ENCODE measurements at regions of chr6 and their contacts with region 1.

Region 1: GRCh38 chr6:153814136-153814535 is 224.9 kb upstream of the OPRM1 start:
- H3K4me3 ChIP-seq: no peak overlapping the region
- H3K27ac ChIP-seq: no peak overlapping the region
- H3K4me1 ChIP-seq: no peaks in the 10 kb centered on the region
- CTCF ChIP-seq: no peak

Region 2: DNA sequence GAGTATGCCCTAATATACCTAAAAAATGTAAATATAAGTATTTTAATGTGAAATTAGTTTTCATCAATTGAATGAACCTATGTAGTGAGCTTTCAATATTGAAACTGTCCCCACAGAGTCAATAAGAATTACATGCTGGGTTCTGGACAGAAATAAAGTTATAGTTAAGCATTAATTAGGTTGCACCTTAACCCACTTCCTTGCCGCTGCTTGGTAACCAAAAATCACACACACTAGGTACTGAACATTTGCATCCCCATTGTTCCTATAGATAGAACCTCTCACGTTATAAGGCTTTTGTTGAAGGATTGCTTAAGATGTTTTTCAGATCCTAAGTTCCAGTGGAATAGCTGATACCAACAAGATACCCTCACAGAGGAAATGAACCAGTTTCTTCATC is 12.2 kb before region 1 on chr6:
- CTCF ChIA-PET with region 1: interaction called, 13 read pairs
- POLR2A ChIA-PET with region 1: no interaction called
- H3K4me3 ChIP-seq: no peak overlapping the region
- H3K27ac ChIP-seq: no peak overlapping the region
- H3K4me1 ChIP-seq: no peaks in the 10 kb centered on the region
- CTCF ChIP-seq: no peak

Region 3: GRCh38 chr6:153927867-153928266 is 113.7 kb after region 1 on chr6:
- CTCF ChIA-PET with region 1: no interaction called
- POLR2A ChIA-PET with region 1: no interaction called
- H3K4me3 ChIP-seq: no peak overlapping the region
- H3K27ac ChIP-seq: no peak overlapping the region
- H3K4me1 ChIP-seq: no peaks in the 10 kb centered on the region
- CTCF ChIP-seq: no peak

Measured in HEK293 (cell line).